WTC11 (cell line): ENCODE measurements at regions of chr1 and their contacts with region 1.

Region 1: DNA sequence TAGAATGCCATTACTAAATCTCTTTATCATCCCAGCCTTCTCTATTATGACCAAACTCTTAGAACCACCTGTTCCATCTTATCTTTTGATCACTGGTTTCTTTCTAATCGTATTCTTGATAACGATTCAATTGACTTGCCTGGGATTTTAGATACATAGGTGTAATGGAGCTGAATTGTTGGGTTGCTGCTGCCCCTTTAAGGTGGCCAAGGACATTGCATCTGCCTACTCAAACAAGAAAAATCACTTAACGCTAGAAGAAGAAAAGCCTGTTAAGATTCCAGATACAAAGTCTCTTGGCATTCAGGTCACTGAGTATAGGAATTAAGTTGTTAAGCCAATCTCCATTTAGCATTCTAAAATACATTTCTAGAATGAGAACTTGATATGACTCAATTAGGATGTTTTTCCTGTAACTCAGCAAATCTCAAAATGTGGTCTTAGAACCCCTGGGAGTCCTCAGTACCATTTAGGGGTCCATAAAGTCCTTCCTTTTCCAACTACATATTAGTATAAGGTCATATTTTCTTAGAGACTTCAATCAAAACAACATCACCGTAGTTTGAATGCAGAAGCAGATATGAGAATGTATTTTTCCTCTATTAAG is 12.4 kb downstream of the NEXN start:
- DNase-seq: peak; percentile 19
- ATAC-seq: peak; percentile 87
- H3K4me3 Mint-ChIP-seq: no peak overlapping the region
- H3K27ac Mint-ChIP-seq: no peak overlapping the region
- H3K4me1 Mint-ChIP-seq: no peaks in the 10 kb centered on the region
- H3K27me3 Mint-ChIP-seq: no peaks in the 10 kb centered on the region
- CTCF ChIP-seq: peak; percentile 28; the same call in 1 of the 2 replicates

Region 2: DNA sequence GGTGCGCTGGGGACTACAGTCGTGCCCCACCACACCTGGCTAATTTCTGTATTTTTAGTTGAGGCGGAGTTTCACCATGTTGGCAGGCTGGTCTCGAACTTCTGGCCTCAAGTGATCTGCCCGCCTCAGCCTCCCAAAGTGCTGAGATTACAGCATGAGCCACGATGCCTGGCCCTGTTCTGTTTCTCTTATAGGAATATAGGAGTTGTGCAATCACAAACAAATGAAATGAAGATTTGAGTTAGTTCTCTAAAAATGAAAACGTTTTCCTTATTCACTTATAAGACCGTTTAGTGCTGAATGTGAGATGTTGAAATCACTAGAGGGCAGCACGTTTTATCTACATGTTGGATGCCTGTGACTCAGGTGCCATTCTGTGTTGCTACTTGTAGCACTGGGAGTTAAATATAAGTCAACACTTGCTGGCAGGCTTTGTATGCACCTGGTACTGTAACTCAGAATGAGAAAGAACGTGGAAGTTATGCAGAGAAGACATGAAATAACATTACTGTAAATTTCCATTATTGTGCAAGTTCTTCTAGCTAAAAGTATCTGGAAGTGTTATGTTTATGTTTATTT is 75.6 kb before region 1 on chr1:
- CTCF ChIA-PET with region 1: interaction called, 11 read pairs
- POLR2A ChIA-PET with region 1: no interaction called
- DNase-seq: no peak
- ATAC-seq: peak; percentile 88
- H3K4me3 Mint-ChIP-seq: no peak overlapping the region
- H3K27ac Mint-ChIP-seq: no peak overlapping the region
- H3K4me1 Mint-ChIP-seq: no peaks in the 10 kb centered on the region
- H3K27me3 Mint-ChIP-seq: no peaks in the 10 kb centered on the region
- CTCF ChIP-seq: no peak

Region 3: GRCh38 chr1:77888081-77888780 is 12.6 kb before region 1 on chr1 and contains the start of gene NEXN:
- CTCF ChIA-PET with region 1: interaction called, 10 read pairs
- POLR2A ChIA-PET with region 1: no interaction called
- DNase-seq: peak; percentile 79
- ATAC-seq: peak; percentile 60
- H3K4me3 Mint-ChIP-seq: peak within 1 kb of the TSS; percentile 91
- H3K27ac Mint-ChIP-seq: peak within 1 kb of the TSS; percentile 87
- H3K4me1 Mint-ChIP-seq: peaks cover 12% of the 10 kb centered on the region
- H3K27me3 Mint-ChIP-seq: peaks cover 2% of the 10 kb centered on the region; the same call in 1 of the 2 replicates
- CTCF ChIP-seq: no peak
- total RNA-seq, gene NEXN: 1.4 to 2.5 TPM (median 1.6 TPM) in 3 replicates

Region 4: GRCh38 chr1:78009836-78010235 is 109.0 kb after region 1 on chr1:
- CTCF ChIA-PET with region 1: no interaction called
- POLR2A ChIA-PET with region 1: no interaction called
- DNase-seq: no peak
- ATAC-seq: no peak
- H3K4me3 Mint-ChIP-seq: no peak overlapping the region
- H3K27ac Mint-ChIP-seq: no peak overlapping the region
- H3K4me1 Mint-ChIP-seq: peaks cover 20% of the 10 kb centered on the region
- H3K27me3 Mint-ChIP-seq: no peaks in the 10 kb centered on the region
- CTCF ChIP-seq: no peak